ENCODE measurements at regions of chr1 and their contacts with region 1.

Region 1: DNA sequence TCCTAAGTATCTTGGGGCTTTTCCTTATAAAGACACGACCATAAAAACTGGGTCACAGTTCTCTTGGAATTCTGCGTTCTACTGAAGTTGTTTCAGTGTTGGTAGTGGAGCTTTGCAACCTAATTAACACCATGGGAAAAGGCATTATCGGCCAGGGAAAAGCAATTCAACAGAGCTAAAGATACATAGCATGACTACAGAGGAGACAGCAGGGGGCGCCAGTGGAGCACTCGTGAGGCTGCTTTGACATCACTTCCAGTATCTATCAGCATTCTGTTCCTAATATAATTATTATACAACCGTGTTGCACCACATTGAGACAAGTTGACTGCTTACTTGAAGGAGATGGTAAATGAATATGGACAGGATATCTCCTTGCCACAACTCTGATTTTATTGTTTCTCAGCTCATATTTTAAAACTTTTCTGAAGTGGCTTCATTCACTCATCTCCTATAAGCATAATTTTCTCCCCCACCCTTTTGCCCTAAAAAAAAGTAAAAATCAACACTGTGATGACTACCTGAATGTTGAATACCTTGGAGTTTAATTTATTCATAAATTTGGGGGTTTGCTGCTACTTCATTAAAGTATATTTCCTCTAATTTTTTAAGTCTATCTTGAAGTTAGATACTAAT is 39.4 kb downstream of the ZP4 start:
- DNase-seq: no peak

Region 2: DNA sequence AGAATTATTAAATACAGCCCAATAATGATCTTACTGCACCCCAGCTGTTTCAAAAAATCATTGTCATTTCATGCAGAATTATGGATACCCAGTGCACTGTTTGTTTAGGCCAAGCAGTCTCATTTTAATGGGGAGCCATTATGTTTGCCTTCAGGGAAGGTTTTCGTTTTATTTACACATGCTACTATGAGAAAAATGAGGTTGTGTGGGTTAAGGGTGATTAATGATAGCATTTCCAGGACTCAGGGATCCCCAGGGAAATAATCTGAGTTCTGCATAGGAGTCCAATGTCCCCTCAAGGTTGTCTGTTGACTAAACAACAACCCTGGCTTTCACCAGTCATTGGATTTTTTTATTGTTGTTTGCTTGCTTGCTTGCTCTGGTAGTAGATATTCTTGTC is 110.4 kb after region 1 on chr1:
- intact Hi-C with region 1: loop called in 1 of 2 experiments (anchors 10 kb)
- DNase-seq: no peak